ENCODE measurements at regions of chr3 and their contacts with region 1.

Region 1: DNA sequence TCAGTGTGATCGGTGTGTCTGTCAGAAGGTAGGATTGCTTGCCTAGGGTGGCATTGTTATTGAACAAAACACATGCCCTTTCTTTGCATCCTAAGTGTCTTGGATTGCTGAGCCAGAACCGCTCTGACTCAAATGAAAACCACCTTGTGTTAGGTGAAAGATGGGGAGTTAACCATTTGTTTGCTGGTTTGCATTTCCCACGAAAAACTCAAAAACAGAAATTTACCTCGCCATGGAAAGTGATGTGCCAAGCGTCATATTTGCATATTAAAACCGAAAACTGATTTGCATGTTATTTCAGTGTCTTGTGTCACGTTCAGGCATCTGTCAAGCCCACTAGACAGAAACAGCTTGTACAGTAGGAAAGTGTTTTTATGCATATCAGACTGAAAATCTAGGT is 474.6 kb upstream of the TPRG1 start:
- DNase-seq: no peak
- H3K4me3 Mint-ChIP-seq: no peak overlapping the region
- H3K27ac Mint-ChIP-seq: peak overlapping the region; percentile 18
- H3K4me1 Mint-ChIP-seq: peaks cover 36% of the 10 kb centered on the region
- H3K27me3 Mint-ChIP-seq: peaks cover 5% of the 10 kb centered on the region

Region 2: GRCh38 chr3:187770224-187770623 is 926.9 kb before region 1 on chr3:
- intact Hi-C with region 1: loop called (anchors 1 kb)
- DNase-seq: no peak
- H3K4me3 Mint-ChIP-seq: peak overlapping the region; percentile 12
- H3K27ac Mint-ChIP-seq: peak overlapping the region; percentile 16
- H3K4me1 Mint-ChIP-seq: peaks cover 56% of the 10 kb centered on the region
- H3K27me3 Mint-ChIP-seq: peaks cover 1% of the 10 kb centered on the region

Region 3: DNA sequence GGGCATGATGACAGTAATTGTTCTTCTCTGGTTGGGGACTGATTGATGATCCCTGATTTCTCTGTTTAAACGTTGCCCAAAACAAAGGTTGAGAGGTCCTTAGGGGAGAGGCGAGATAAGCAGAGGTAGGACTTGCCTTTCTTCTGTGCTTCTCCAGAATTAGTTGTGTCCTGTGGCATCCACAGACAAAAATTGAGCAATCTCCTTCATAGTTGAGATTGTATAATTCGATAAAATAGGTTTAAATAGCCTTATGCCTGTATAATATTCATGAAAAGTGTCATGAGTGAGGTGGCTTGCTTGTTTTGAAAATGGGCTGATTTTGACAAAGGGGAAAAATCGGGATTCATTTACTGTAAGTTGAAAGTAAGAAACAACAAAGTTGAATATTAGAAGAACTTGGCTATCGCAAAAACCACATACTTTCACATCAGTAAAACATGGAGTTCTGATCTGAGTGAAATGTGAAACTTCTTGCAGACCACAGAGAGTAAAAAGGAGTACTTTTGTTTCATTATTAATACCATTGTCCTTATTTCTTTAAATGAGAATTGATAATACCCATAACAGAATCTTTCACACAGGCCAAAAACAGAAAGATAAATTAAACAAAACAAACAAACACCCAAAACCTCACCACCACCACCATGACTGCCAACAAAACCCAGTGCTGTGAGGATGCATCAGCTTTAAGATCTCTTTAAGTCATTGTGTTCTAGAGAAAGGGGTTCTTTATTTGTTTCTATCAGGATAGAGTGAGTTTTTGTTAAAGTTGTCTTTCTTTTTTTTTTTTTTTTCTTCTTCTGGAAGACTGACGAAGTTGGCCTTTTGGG is 387.5 kb before region 1 on chr3:
- intact Hi-C with region 1: loop called (anchors 1 kb)
- DNase-seq: no peak
- H3K4me3 Mint-ChIP-seq: peak overlapping the region; percentile 40
- H3K27ac Mint-ChIP-seq: peak overlapping the region; percentile 64
- H3K4me1 Mint-ChIP-seq: peaks cover 35% of the 10 kb centered on the region
- H3K27me3 Mint-ChIP-seq: peaks cover 9% of the 10 kb centered on the region

Region 4: DNA sequence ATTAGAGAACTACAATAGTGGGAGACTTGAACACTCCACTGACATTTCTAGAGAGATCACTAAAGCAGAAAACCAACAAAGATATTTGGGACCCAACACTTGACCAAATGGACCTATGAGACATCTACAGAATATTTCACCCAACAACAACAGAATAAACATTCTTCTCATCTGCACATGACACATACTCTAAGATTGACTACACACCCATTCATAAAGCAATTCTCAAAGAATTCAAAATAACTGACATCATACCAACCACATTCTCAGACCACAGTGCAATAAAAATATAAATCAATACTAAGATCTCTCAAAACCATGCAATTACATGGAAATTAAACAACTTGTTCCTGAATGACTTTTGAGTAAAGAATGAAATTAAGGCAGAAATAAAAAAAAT is 69.5 kb before region 1 on chr3:
- intact Hi-C with region 1: loop called (anchors 1 kb)
- DNase-seq: no peak
- H3K4me3 Mint-ChIP-seq: no peak overlapping the region
- H3K27ac Mint-ChIP-seq: no peak overlapping the region
- H3K4me1 Mint-ChIP-seq: peaks cover 13% of the 10 kb centered on the region
- H3K27me3 Mint-ChIP-seq: no peaks in the 10 kb centered on the region

Region 5: GRCh38 chr3:188656196-188656982 is 40.7 kb before region 1 on chr3:
- intact Hi-C with region 1: no loop called
- DNase-seq: no peak
- H3K4me3 Mint-ChIP-seq: no peak overlapping the region
- H3K27ac Mint-ChIP-seq: no peak overlapping the region
- H3K4me1 Mint-ChIP-seq: no peaks in the 10 kb centered on the region
- H3K27me3 Mint-ChIP-seq: peaks cover 2% of the 10 kb centered on the region

Region 6: GRCh38 chr3:188683032-188683521 is 14.1 kb before region 1 on chr3:
- intact Hi-C with region 1: loop called (anchors 1 kb)
- DNase-seq: no peak
- H3K4me3 Mint-ChIP-seq: no peak overlapping the region
- H3K27ac Mint-ChIP-seq: peak overlapping the region; percentile 74
- H3K4me1 Mint-ChIP-seq: peaks cover 28% of the 10 kb centered on the region
- H3K27me3 Mint-ChIP-seq: no peaks in the 10 kb centered on the region

Region 7: DNA sequence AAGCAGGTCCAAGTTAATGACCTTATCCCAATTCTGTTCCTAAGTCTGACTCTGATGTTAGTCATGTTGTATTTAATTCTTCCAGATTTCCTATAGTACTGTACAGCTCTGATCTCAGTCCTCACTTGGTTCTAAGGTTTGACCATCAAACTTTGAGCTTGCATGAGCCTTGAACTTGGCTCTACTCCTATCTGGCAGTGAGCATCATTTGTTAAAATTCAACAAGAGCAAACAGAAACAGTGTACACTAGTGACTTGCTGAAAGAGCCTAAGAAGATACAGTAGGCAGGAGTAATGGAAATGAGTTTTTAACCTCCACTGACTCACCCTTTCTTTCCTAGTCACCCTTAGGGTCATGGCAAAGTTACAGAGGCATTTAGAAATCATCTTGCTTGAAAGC is 23.5 kb after region 1 on chr3:
- intact Hi-C with region 1: loop called (anchors 1 kb)
- DNase-seq: no peak
- H3K4me3 Mint-ChIP-seq: no peak overlapping the region
- H3K27ac Mint-ChIP-seq: no peak overlapping the region
- H3K4me1 Mint-ChIP-seq: peaks cover 35% of the 10 kb centered on the region
- H3K27me3 Mint-ChIP-seq: peaks cover 2% of the 10 kb centered on the region

Measured in activated T-helper 1 cell treated with anti-CD3 and anti-CD28 coated beads, Interleukin-12 subunit alpha, Interleukin-12 subunit beta, Interleukin-2, Interleukin-4 antibody, amounts not matched to agents 30 ng/mL and 10 ng/mL and 1 ng/mL, durations not matched to agents 14 hours and 24 hours and 36 hours (primary cell).